ENCODE measurements at regions of chr12 and their contacts with region 1.

Region 1: DNA sequence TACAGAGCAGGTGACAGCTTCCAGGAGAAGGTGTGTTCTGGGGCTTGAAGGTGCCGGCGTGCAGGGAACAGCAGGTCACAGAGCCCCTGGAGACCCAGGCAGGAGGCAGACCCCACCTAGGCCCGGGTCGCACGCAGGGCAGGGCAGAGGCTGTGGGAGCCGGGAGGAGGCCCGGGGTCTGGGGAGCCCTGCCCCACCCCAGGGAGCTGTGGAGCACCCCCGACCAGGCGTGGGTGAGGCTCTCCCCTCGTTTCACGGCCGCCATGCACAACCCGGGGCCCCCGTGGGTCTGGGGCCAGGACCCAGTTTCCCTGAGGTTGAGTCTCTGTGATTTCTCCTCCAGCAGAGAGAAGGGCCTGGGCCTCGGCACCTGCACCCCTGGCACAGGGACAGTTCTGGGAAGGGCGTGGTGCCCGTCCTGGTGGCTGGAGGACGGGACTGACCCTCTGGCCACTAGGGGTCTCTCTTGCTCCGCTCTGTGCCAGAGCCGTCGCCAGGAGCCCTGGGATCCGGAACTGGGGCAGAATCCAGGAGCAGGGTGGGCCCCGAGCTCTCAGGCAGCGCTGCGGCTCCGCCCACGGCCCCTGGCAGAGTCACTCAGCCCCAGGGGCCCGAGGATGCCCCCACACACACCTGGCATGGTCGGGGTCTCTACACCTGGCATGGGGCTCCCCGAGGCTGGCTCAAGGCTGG is 75.2 kb upstream of the FBRSL1 start:
- DNase-seq: peak; percentile 80
- H3K4me3 Mint-ChIP-seq: no peak overlapping the region
- H3K27ac Mint-ChIP-seq: no peak overlapping the region
- H3K4me1 Mint-ChIP-seq: no peaks in the 10 kb centered on the region
- H3K27me3 Mint-ChIP-seq: no peaks in the 10 kb centered on the region

Region 2: DNA sequence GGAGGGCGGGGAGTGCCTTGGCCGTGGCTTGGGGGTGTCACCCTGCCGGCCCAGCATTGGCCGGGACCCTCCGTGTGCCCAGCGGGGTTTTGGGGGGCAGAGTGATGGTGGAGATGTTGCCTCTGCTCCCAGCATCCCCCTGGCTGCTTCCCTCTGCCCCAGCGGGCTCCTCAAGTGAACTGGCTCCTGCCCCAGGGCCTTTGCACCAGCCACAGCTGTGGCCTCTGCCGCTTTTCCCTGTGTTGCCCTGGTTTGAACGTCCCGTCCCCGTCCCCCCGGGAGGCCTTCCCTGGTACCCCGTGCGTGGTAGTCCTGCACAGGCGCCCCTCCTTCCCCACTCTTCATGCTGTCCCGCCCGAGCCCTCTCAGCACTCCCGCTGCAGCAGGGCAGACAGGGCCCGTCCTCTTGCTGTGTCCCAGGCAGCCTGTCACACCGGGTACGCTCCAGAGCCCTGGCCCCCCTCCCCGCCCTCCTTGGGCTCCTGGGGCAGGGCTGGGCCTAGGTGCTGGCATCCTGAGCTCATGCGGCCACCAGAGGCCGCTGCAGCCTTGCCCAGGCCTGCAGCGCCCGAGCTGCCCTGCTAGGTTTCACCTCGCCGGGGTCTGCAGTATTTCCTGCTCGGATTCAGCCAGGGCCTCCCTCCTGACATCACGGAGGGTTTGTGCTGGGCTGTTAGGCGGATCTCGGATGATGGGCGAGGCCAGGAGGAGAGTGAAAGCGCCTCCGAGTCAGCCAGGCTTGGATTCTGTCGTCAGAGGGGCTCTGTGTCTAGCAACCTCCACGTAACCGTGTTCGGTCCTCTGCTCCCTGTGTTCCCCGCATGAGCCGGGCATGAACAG is 261.1 kb before region 1 on chr12:
- CTCF ChIA-PET with region 1: interaction called, 27 read pairs
- POLR2A ChIA-PET with region 1: no interaction called
- intact Hi-C with region 1: loop called (anchors 5 kb)
- DNase-seq: peak; percentile 75
- H3K4me3 Mint-ChIP-seq: no peak overlapping the region
- H3K27ac Mint-ChIP-seq: no peak overlapping the region
- H3K4me1 Mint-ChIP-seq: no peaks in the 10 kb centered on the region
- H3K27me3 Mint-ChIP-seq: no peaks in the 10 kb centered on the region

Region 3: DNA sequence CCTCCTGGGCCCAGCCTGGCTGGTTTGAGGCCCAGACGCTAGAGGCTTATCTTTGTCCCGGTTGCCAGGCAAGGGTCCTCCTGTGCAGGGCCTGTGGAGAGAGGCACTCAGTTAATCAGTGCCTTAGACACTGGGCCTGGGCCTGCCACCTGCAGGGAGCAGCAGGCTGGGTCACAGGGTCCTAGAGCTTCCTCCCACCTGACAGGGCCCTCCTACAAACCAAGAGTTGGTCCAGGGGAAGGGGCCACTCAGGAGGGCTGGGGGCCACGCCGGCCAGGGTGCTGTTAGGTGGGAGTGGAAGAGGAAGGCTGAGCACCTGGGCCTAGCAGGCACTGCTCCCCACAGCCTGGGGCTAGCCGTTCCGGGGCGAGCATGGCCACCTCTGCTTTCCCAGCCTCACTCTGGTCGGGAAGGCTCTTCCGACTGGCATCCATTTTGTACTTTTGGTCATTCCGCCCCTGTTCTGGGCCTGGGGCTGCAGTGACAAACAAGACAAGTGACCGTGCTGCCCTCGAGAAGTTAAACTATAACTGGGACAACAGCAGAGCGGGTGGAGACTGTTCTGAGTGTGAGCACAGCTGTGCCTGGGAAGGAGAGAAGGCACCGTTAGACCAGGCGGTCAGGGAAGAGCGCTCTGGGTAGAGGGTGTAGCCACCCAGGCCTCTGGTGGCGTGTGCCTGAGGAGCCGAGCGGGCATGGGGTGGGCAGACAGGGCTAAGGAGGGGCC is 102.4 kb after region 1 on chr12:
- CTCF ChIA-PET with region 1: interaction called, 61 read pairs
- POLR2A ChIA-PET with region 1: no interaction called
- intact Hi-C with region 1: no loop called
- DNase-seq: no peak
- H3K4me3 Mint-ChIP-seq: no peak overlapping the region
- H3K27ac Mint-ChIP-seq: no peak overlapping the region
- H3K4me1 Mint-ChIP-seq: peaks cover 5% of the 10 kb centered on the region
- H3K27me3 Mint-ChIP-seq: no peaks in the 10 kb centered on the region

Region 4: GRCh38 chr12:132523576-132524331 is 109.0 kb after region 1 on chr12:
- CTCF ChIA-PET with region 1: interaction called, 61 read pairs
- POLR2A ChIA-PET with region 1: no interaction called
- intact Hi-C with region 1: loop called (anchors 1 kb)
- DNase-seq: peak; percentile 81
- H3K4me3 Mint-ChIP-seq: no peak overlapping the region
- H3K27ac Mint-ChIP-seq: no peak overlapping the region
- H3K4me1 Mint-ChIP-seq: peaks cover 2% of the 10 kb centered on the region
- H3K27me3 Mint-ChIP-seq: no peaks in the 10 kb centered on the region

Region 5: DNA sequence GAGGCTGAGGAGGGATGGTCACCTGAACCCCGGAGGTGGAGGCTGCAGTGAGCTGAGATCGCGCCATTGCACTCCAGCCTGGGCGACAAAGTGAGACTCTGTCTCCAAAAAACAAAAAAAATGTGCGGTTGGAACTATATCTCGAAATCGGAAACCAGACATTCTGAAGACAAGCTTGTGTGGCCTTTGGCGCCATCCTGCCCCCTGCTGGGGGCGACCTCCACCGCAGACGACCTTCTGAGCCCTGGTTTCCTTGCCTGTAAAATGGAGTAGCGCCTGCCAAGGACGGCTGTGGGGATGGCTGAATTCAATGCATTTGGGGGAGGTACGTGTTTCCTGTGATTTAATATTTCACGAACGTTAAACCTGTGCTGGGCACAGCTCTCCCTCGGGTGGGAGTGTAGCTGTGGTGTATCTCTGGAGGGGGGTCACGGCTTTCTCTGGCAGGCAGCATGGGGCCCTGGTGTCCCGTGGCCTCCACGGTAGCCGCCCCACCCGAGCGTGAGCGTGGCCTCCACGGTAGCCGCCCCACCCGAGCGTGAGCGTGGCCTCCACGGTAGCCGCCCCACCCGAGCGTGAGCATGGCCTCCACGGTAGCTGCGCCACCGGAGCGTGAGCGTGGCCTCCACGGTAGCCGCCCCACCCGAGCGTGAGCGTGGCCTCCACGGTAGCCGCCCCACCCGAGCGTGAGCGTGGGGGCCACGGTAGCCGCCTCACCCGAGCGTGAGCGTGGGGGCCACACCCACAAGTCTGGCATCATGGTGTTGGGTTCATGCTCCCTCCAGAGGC is 140.3 kb after region 1 on chr12:
- CTCF ChIA-PET with region 1: interaction called, 15 read pairs
- POLR2A ChIA-PET with region 1: no interaction called
- intact Hi-C with region 1: no loop called
- DNase-seq: peak; percentile 32
- H3K4me3 Mint-ChIP-seq: no peak overlapping the region
- H3K27ac Mint-ChIP-seq: no peak overlapping the region
- H3K4me1 Mint-ChIP-seq: peaks cover 13% of the 10 kb centered on the region
- H3K27me3 Mint-ChIP-seq: peaks cover 4% of the 10 kb centered on the region

Region 6: GRCh38 chr12:132560614-132561426 is 146.0 kb after region 1 on chr12:
- CTCF ChIA-PET with region 1: interaction called, 33 read pairs
- POLR2A ChIA-PET with region 1: no interaction called
- intact Hi-C with region 1: loop called (anchors 1 kb)
- DNase-seq: peak; percentile 80
- H3K4me3 Mint-ChIP-seq: peak overlapping the region; percentile 70
- H3K27ac Mint-ChIP-seq: no peak overlapping the region
- H3K4me1 Mint-ChIP-seq: peaks cover 15% of the 10 kb centered on the region
- H3K27me3 Mint-ChIP-seq: peaks cover 4% of the 10 kb centered on the region

Region 7: GRCh38 chr12:132614861-132615578 is 200.2 kb after region 1 on chr12:
- CTCF ChIA-PET with region 1: interaction called, 38 read pairs
- POLR2A ChIA-PET with region 1: no interaction called
- intact Hi-C with region 1: loop called (anchors 2 kb)
- DNase-seq: peak; percentile 86
- H3K4me3 Mint-ChIP-seq: no peak overlapping the region
- H3K27ac Mint-ChIP-seq: no peak overlapping the region
- H3K4me1 Mint-ChIP-seq: peaks cover 14% of the 10 kb centered on the region
- H3K27me3 Mint-ChIP-seq: peaks cover 35% of the 10 kb centered on the region